ENCODE measurements at regions of chr1 and their contacts with region 1.

Region 1: GRCh38 chr1:34859446-34860200 is at the start of gene SMIM12:
- DNase-seq: peak; percentile 97
- total RNA-seq, gene SMIM12: 49.4 TPM

Region 2: GRCh38 chr1:34796990-34797389 is 62.6 kb before region 1 on chr1:
- intact Hi-C with region 1: no loop called
- DNase-seq: no peak

Region 3: DNA sequence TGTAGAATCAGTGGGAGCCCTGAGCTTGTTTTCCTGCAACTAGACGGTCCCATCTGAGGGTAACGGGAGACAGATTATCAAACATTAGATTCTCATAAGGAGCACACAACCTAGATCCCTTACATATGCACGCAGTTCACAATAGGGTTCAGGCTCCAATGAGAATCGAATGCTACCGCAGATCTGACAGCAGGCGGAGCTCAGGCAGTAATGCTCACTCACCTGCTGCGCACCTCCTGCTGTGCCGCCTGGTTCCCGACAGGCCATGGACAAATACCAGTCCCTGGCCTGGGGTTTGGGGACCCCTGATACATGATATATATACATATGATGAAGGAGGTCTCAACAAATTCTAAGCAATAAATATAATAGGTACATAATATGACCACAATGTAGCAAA is 19.6 kb after region 1 on chr1:
- intact Hi-C with region 1: no loop called
- DNase-seq: no peak

Region 4: GRCh38 chr1:34984793-34985608 is 125.4 kb after region 1 on chr1 and contains the start of gene TMEM35B:
- intact Hi-C with region 1: loop called (anchors 10 kb)
- DNase-seq: peak; percentile 87
- total RNA-seq, gene TMEM35B: 8.5 TPM

Region 5: DNA sequence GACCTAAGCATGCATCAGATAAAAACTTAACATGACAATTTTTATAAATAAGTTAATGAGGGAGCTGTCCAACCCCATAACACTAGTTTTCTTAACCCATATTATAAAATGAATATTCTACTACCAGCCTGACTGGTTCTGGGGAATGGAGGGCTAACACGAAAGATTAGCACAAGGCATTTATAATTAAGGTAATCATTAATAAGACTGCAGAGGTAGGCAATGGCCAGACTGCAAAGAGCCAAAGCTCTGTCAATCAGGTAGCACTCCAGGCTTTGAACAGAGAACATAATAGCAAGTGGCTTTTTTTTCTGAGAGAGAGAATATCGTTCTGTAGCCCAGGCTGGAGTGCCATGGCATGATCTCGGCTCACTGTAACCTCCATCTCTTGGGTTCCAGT is 146.1 kb after region 1 on chr1:
- intact Hi-C with region 1: no loop called
- DNase-seq: no peak

Region 6: GRCh38 chr1:35180776-35181374 is 321.3 kb after region 1 on chr1:
- intact Hi-C with region 1: loop called (anchors 10 kb)
- DNase-seq: no peak

Measured in cardiac septum (tissue), 1 donor.